ENCODE measurements at regions of chr4 and their contacts with region 1.

Region 1: GRCh38 chr4:81666491-81666890 is 194.8 kb upstream of the RASGEF1B start:
- DNase-seq: no peak
- ATAC-seq: no peak
- H3K4me3 ChIP-seq: no peak overlapping the region
- H3K4me3 Mint-ChIP-seq: no peak overlapping the region
- H3K27ac ChIP-seq: no peak overlapping the region
- H3K27ac Mint-ChIP-seq: no peak overlapping the region
- H3K4me1 ChIP-seq: no peaks in the 10 kb centered on the region
- H3K4me1 Mint-ChIP-seq: no peaks in the 10 kb centered on the region
- H3K27me3 ChIP-seq: no peaks in the 10 kb centered on the region
- H3K27me3 Mint-ChIP-seq: no peaks in the 10 kb centered on the region
- CTCF ChIP-seq: no peak

Region 2: DNA sequence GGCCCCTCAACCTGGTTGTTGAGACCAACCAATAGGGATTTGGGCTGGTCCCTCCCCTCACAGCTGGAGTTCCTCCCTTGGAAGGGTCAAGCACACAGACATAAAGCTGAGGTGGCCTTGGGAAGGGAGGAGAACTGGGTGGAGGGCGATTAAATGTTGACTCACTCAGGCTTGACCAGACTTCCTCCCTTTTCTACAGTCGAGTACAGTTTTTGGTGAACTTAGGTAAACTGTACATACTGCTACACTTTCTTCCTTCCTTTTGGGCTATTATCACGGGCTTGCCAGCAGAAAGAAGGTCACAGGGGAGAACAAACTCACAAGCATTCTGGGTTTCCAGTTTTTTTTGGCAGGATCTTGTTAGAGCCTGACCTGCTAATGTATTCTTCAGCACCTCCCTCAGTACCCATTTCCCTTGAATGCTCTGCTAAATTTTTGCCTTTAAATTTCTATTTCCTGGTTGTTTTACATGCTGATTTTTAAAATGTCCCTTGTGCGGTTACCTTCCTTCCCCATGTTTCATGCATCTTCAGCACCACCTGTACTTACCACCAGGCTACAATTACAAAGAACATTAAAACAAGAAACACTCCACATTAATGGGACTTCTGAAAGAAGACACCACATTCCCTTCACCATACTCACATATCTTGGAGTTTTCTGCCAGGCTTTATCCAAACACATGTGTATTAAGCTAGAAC is 59.5 kb before region 1 on chr4:
- CTCF ChIA-PET with region 1: no interaction called
- POLR2A ChIA-PET with region 1: no interaction called
- intact Hi-C with region 1: loop called in 1 of 2 experiments (anchors 2 kb)
- DNase-seq: peak in 2 of 14 experiments; percentile 32 to 38
- ATAC-seq: peak; percentile 17
- H3K4me3 ChIP-seq: no peak overlapping the region
- H3K4me3 Mint-ChIP-seq: no peak overlapping the region
- H3K27ac ChIP-seq: no peak overlapping the region
- H3K27ac Mint-ChIP-seq: no peak overlapping the region
- H3K4me1 ChIP-seq: no peaks in the 10 kb centered on the region
- H3K4me1 Mint-ChIP-seq: peaks cover 9% of the 10 kb centered on the region
- H3K27me3 ChIP-seq: no peaks in the 10 kb centered on the region
- H3K27me3 Mint-ChIP-seq: no peaks in the 10 kb centered on the region
- CTCF ChIP-seq: no peak